ENCODE measurements at regions of chr5 and their contacts with region 1.

Region 1: GRCh38 chr5:178732281-178732680 is 1.8 kb upstream of the ZNF354A start:
- DNase-seq: no peak
- ATAC-seq: no peak

Region 2: GRCh38 chr5:179648410-179648809 is 916.1 kb after region 1 on chr5:
- intact Hi-C with region 1: loop called (anchors 5 kb)
- DNase-seq: no peak
- ATAC-seq: peak; percentile 26

Measured in sciatic nerve (tissue), 2 donors.